Cardiac septum (tissue), 1 donor: ENCODE measurements at regions of chrX and their contacts with region 1.

Region 1: DNA sequence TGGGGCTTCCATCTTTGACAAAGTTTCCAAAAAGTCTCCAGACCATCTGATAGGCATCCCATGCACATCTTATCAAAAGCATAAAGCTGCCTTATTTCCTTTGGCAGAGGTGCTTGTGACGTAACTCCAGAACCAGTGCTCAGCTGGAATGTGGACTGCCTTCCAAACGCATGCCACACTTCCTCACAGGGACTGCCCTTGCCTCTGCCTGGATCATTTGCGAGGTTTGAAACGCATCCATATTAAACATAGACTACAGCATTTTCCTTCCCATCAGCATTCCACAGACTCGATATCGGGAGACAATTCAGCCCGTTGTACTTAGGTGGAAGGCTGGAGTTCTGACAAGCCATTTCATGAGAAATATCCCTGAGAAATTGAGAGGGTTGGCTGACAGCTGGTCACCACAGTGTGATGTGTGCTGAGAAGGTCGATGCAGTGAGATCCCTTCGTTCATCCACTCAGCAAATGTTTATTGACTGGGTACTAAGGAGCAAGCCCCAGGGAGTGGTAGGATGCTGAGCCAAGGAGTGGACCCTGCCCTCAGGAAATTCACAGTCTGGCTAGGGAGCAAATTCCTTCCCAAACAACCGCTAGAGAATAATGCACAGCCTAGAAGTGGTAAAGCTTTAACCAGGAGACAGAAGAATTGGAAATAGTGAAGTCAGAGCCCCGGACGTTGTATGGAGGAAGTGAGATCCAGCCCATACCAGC is 376.0 kb downstream of the BCOR start:
- DNase-seq: no peak

Region 2: GRCh38 chrX:38929966-38930421 is 791.7 kb before region 1 on chrX:
- intact Hi-C with region 1: no loop called
- DNase-seq: no peak

Region 3: GRCh38 chrX:39688576-39689375 is 32.9 kb before region 1 on chrX:
- intact Hi-C with region 1: loop called (anchors 5 kb)
- DNase-seq: peak; percentile 79

Region 4: DNA sequence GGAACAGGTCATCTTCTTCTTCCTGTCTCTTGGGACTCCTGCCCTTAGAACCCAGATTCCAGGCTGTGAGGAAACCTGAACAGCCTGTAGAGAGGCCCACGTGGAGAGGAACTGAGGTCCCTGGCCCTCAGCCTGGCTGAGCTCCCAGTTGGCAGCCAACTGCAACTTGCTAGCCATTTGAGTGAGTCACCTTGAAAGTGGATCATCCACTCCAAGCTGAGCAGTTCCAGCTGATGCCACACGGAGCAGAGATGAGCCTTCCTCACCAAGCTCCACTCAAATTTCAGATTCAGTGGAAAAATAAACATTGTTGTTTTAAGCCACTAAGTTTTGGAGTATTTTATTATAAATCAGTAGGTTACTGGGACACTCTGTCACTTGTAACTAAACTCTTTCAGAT is 16.4 kb before region 1 on chrX:
- intact Hi-C with region 1: no loop called
- DNase-seq: no peak

Region 5: GRCh38 chrX:39836802-39837420 is 115.2 kb after region 1 on chrX:
- intact Hi-C with region 1: no loop called
- DNase-seq: no peak